AG04450 (cell line): ENCODE measurements at regions of chr1 and their contacts with region 1.

Region 1: DNA sequence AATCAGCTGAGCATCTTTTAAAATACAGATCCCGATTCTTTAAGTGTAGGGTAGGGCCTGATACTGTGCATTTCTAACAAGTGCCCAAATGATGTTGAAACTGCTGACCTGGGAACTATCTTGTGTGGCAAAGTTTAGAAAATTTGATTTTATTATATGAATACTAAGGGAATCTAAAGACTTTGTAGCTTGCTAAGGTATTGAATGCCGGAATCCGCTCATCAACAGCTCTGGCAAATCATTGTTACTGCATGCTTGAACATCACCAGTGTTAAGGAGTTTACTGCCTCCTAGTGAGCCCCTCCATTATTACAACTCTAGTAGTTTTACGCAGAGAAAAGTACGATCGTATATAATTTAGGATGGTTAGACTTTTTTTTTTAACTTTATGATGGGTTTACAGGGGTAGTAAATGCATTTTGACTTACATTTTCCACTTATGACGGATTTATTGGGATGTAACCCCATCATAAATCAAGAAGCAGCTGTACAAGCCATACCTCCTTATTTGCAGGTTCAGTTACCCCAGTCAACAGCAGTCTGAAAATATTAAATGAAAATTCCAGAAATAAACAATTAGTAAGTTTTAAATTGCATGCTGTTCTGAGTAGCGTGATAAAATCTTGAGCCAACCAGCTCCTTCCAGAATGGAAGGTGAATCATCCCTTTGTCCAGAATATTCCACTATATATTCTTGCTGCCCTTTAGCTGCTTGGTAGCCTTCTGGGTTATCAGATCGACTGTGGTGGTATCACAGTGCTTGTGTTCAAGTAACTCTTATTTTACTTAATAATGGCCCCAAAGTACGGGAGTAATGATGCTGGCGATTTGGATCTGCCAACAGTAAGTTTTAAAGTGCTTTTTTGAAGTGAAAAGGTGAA is 892 bp downstream of the TYW3 start:
- DNase-seq: peak; percentile 33
- H3K4me3 ChIP-seq: peak overlapping the region; percentile 95
- H3K27ac ChIP-seq: peak overlapping the region; percentile 96
- H3K27me3 ChIP-seq: no peaks in the 10 kb centered on the region
- CTCF ChIP-seq: peak; percentile 81

Region 2: GRCh38 chr1:74689621-74690363 is 44.1 kb before region 1 on chr1:
- CTCF ChIA-PET with region 1: interaction called, 19 read pairs
- POLR2A ChIA-PET with region 1: no interaction called
- DNase-seq: peak; percentile 24
- H3K4me3 ChIP-seq: no peak overlapping the region
- H3K27ac ChIP-seq: no peak overlapping the region
- H3K27me3 ChIP-seq: no peaks in the 10 kb centered on the region
- CTCF ChIP-seq: peak; percentile 84

Region 3: DNA sequence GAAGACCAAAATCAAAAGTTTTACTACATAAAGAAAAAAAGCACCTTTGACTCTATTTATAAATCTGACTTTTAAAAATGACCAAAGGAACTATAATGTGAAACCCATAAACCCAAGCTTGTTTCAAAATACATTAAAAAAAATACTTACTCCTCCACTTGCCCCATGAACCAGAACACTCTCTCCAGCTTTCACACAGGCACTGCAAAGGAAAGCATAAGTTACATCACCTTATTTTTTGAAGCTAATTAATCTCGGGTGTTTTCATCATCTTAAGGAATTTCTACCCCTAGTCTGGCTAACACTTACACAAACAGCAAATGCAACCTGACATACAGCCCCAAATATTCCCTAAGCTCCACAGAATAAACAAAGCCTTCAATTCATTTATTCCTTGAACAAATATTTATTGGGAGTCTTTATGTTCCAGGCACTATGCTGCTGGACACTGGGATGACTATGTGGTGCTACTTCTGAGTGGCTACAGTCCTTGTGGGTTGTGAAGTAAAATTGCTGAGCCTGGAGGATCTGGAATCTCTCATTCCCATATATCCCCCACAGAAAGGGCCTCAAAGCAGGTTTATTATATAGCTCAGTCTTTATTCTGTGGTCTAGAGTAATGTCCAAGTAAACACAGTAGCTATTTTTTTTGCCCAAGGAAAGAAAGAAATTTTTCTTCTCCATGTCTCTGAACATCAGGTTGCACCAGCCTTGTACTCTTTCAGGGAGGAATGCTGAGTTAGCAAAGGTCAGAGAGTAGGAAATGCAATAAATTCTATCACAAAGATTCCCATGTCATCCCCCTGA is 19.2 kb before region 1 on chr1:
- CTCF ChIA-PET with region 1: interaction called, 45 read pairs
- POLR2A ChIA-PET with region 1: interaction called, 3 read pairs
- DNase-seq: peak; percentile 8
- H3K4me3 ChIP-seq: no peak overlapping the region
- H3K27ac ChIP-seq: peak overlapping the region; percentile 43
- H3K27me3 ChIP-seq: no peaks in the 10 kb centered on the region
- CTCF ChIP-seq: no peak

Region 4: DNA sequence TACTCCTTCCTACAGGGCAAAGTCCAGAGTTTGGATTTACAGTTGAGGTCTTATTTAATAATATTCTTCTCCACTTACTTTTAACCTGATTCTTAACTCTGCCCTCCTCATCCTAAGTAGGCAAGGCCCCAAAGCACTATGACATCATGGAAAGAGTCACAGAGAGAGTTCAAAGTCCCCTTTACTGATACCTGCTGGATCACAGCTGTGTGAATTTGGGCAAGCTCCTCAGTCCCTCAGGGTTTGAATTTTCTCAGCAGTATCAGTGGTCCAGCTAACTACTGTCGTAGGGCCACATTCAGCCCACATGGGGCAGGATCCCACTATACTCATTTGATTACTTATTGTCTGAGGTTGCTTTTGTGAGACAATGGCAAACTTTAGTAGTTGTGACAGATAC is 15.1 kb after region 1 on chr1:
- CTCF ChIA-PET with region 1: interaction called, 11 read pairs
- POLR2A ChIA-PET with region 1: no interaction called
- DNase-seq: no peak
- H3K4me3 ChIP-seq: no peak overlapping the region
- H3K27ac ChIP-seq: no peak overlapping the region
- H3K27me3 ChIP-seq: no peaks in the 10 kb centered on the region
- CTCF ChIP-seq: no peak

Region 5: GRCh38 chr1:74763807-74764206 is 30.0 kb after region 1 on chr1:
- CTCF ChIA-PET with region 1: interaction called, 14 read pairs
- POLR2A ChIA-PET with region 1: interaction called, 4 read pairs
- DNase-seq: no peak
- H3K4me3 ChIP-seq: no peak overlapping the region
- H3K27ac ChIP-seq: no peak overlapping the region
- H3K27me3 ChIP-seq: no peaks in the 10 kb centered on the region
- CTCF ChIP-seq: no peak

Region 6: GRCh38 chr1:74771913-74772515 is 38.2 kb after region 1 on chr1:
- CTCF ChIA-PET with region 1: interaction called, 11 read pairs
- POLR2A ChIA-PET with region 1: no interaction called
- DNase-seq: peak; percentile 8
- H3K4me3 ChIP-seq: no peak overlapping the region
- H3K27ac ChIP-seq: no peak overlapping the region
- H3K27me3 ChIP-seq: no peaks in the 10 kb centered on the region
- CTCF ChIP-seq: peak; percentile 76